ENCODE measurements at regions of chr2 and their contacts with region 1.

Region 1: DNA sequence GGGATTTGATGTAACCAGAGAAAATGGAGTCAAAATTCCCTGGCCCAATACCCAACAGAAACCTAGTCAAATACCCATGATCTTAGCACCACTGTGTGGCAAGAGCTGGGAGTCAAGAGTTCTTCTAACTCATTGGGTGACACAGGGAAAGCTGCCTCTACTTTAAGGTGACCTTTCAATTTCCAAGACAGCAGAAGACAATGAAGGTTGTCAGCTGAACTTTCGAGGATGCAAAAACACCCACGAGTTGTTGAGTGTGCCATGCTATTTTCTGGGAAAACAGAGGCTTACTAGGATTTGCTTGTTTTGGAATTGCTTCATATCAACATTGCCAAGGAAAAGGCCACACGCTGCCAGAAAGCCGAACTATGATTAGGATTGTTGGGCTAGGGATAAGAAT is 61.6 kb upstream of the CYRIA start:
- DNase-seq: no peak
- ATAC-seq: no peak
- H3K4me3 Mint-ChIP-seq: no peak overlapping the region
- H3K27ac Mint-ChIP-seq: no peak overlapping the region
- H3K4me1 Mint-ChIP-seq: peaks cover 47% of the 10 kb centered on the region
- H3K27me3 Mint-ChIP-seq: peaks cover 17% of the 10 kb centered on the region

Region 2: DNA sequence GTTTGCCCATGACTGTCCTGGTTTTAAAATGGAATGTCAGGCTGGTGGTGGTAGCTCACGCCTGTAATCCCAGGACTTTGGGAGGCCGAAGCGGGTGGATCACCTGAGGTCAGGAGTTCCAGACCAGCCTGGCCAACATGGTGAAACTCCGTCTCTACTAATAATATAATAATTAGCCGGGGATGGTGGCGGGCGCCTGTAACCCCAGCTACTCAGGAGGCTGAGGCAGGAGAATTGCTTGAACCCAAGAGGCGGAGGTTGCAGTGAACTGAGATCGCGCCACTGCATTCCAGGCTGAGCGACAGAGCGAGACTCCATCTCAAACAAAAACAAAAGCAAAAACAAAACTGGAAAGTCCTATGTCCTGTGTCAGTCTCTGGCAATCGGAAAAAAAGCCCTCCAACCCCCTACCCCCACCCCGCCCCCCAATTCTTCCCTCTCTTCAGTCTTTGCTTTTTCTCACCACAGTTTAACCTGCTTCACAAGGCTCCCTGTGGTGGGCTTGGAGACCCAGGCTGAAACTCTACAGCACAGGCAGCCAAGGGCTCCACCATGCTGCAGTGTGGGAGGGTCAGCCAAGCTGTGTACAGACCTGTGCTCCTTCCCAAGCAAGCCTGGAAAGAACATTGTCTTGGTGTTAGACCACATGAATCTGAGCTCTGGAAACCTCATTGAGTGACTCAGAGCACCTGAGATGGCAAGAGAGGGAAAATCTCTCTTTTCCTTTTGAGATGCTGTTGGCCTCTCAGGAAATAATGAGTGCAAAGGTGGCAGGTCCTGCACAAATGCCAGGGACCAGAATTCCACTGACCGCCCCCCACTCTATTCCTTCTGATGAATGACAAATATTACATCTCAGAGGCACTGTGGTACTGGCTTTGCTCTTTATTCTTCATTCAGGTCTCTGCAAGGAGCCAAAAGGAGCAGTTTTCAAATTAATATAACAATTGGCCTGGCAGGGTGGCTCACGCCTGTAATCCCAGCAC is 770.2 kb before region 1 on chr2:
- CTCF ChIA-PET with region 1: no interaction called
- POLR2A ChIA-PET with region 1: interaction called, 10 read pairs
- intact Hi-C with region 1: no loop called
- DNase-seq: no peak
- ATAC-seq: no peak
- H3K4me3 Mint-ChIP-seq: no peak overlapping the region
- H3K27ac Mint-ChIP-seq: no peak overlapping the region
- H3K4me1 Mint-ChIP-seq: no peaks in the 10 kb centered on the region
- H3K27me3 Mint-ChIP-seq: no peaks in the 10 kb centered on the region

Region 3: GRCh38 chr2:15965564-15966019 is 761.7 kb before region 1 on chr2:
- CTCF ChIA-PET with region 1: no interaction called
- POLR2A ChIA-PET with region 1: no interaction called
- intact Hi-C with region 1: loop called in 1 of 2 experiments (anchors 2 kb)
- DNase-seq: peak; percentile 80
- ATAC-seq: peak; percentile 67
- H3K4me3 Mint-ChIP-seq: no peak overlapping the region
- H3K27ac Mint-ChIP-seq: peak overlapping the region; percentile 65
- H3K4me1 Mint-ChIP-seq: peaks cover 52% of the 10 kb centered on the region
- H3K27me3 Mint-ChIP-seq: peaks cover 2% of the 10 kb centered on the region

Region 4: DNA sequence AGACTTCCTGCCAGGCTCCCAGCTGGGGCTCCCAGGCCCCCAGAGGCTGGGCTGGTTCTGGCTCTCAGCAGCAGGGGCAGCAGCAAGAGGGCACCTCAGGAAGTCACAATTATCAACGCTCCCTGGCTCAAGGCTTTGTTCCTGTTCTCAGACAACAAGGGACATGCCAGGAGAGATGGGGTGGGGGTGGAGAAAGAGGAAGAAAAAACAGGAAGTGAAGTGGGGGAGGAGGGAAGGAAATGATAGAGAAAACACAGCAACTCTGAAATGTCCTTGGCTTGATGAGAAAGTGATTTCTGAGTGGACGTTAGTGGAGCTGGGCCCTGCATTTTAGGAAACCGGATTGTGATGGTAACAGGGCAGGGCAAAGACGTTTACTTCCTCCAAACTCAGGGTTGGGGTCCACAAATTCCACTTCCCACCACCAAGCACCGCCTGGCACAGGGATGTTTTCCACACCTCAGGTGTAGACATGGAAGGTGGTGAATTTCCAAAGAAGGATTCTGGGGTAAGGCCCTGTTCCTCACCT is 102.0 kb before region 1 on chr2:
- CTCF ChIA-PET with region 1: no interaction called
- POLR2A ChIA-PET with region 1: no interaction called
- intact Hi-C with region 1: loop called in 1 of 2 experiments (anchors 2 kb)
- DNase-seq: no peak
- ATAC-seq: no peak
- H3K4me3 Mint-ChIP-seq: no peak overlapping the region
- H3K27ac Mint-ChIP-seq: peak overlapping the region; percentile 48
- H3K4me1 Mint-ChIP-seq: peaks cover 50% of the 10 kb centered on the region
- H3K27me3 Mint-ChIP-seq: no peaks in the 10 kb centered on the region

Region 5: DNA sequence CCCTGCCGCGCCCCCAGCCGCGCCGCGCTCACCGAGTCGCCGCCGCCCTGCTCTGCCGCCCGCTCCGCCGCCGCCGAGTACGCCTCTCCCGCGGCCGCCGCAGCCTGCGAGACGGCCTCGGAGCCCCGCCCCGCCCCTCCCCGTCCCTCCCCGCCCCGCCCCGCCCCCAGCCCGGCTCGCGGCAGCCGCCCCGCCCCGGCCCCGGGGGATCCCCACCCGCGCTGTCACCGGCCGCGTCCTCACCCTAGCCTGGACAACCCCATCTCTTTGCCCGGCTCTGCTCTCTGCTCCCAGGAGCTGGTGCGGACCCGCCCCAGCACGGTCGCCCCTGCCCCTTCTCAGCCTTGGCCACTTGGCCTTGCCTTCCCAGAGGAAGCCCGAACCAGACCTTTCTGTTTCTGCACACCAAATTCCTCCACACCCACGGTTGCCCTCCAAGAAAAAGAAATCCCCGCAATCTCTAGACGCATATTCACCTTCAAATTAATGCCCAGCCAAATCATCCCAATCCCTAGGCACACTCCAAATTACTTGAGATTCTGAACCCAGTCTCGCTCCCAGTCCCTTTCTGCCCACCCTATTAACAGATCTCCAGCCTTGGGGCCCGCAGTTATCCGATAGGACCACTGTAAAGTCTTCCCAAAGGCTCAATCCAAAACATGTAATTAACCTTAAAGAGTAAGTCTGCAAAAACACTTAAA is 61.4 kb before region 1 on chr2 and contains the start of gene CYRIA:
- CTCF ChIA-PET with region 1: no interaction called
- POLR2A ChIA-PET with region 1: no interaction called
- intact Hi-C with region 1: loop called (anchors 1 to 5 kb)
- DNase-seq: peak; percentile 80
- ATAC-seq: peak; percentile 77
- H3K4me3 Mint-ChIP-seq: peak within 1 kb of the TSS; percentile 73
- H3K27ac Mint-ChIP-seq: peak within 1 kb of the TSS; percentile 79
- H3K4me1 Mint-ChIP-seq: peaks cover 16% of the 10 kb centered on the region
- H3K27me3 Mint-ChIP-seq: peaks cover 41% of the 10 kb centered on the region
- total RNA-seq, gene CYRIA: 2.5 to 2.8 TPM

Region 6: DNA sequence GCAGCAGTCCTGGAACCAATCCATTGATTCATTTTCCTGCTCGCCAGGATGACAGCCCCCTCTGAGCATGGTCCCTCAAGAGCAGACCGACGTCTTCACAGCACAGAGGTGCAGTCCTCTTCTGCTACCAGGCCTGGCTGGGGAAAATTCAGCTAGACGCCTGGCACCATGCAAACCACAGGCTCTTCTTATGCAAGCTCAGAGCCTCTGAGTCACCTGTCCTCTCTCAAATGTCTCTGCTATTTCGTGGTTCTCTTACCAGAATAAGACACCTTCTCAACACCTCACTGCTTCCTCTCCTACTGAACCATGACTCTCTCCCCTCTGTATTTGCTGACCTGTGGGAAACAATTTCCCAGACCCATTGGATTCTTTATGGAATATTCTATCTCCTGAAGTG is 18.2 kb after region 1 on chr2:
- CTCF ChIA-PET with region 1: interaction called, 4 read pairs
- POLR2A ChIA-PET with region 1: no interaction called
- intact Hi-C with region 1: loop called (anchors 1 kb)
- DNase-seq: peak; percentile 62
- ATAC-seq: peak; percentile 67
- H3K4me3 Mint-ChIP-seq: no peak overlapping the region
- H3K27ac Mint-ChIP-seq: no peak overlapping the region
- H3K4me1 Mint-ChIP-seq: peaks cover 33% of the 10 kb centered on the region
- H3K27me3 Mint-ChIP-seq: peaks cover 10% of the 10 kb centered on the region

Region 7: GRCh38 chr2:17753803-17754663 is 1026.8 kb after region 1 on chr2 and contains the starts of genes GEN1 and SMC6:
- CTCF ChIA-PET with region 1: no interaction called
- POLR2A ChIA-PET with region 1: no interaction called
- intact Hi-C with region 1: loop called in 1 of 2 experiments (anchors 5 kb)
- DNase-seq: peak; percentile 95
- ATAC-seq: peak; percentile 90
- H3K4me3 Mint-ChIP-seq: peak within 1 kb of the TSS; percentile 91
- H3K27ac Mint-ChIP-seq: peak within 1 kb of the TSS; percentile 93
- H3K4me1 Mint-ChIP-seq: peaks cover 20% of the 10 kb centered on the region
- H3K27me3 Mint-ChIP-seq: no peaks in the 10 kb centered on the region
- total RNA-seq, gene GEN1: 21.9 to 25.4 TPM
- total RNA-seq, gene SMC6: 25.4 to 26.3 TPM

Measured in activated CD4-positive, alpha-beta T cell treated with anti-CD3 and anti-CD28 coated beads for 36 hours (primary cell).